SK-N-SH (cell line): ENCODE measurements at regions of chr11 and their contacts with region 1.

Region 1: GRCh38 chr11:72722050-72722748 is 30.0 kb downstream of the ARAP1 start:
- DNase-seq: peak; percentile 92
- H3K4me3 ChIP-seq: peak overlapping the region; percentile 50 to 65
- H3K27ac ChIP-seq: peak overlapping the region; percentile 65 to 96
- H3K4me1 ChIP-seq: peaks cover 13 to 53% of the 10 kb centered on the region in 2 experiments
- H3K27me3 ChIP-seq: no peaks in the 10 kb centered on the region
- CTCF ChIP-seq: no peak
- EP300 ChIP-seq: no peak
- RAD21 ChIP-seq: no peak

Region 2: DNA sequence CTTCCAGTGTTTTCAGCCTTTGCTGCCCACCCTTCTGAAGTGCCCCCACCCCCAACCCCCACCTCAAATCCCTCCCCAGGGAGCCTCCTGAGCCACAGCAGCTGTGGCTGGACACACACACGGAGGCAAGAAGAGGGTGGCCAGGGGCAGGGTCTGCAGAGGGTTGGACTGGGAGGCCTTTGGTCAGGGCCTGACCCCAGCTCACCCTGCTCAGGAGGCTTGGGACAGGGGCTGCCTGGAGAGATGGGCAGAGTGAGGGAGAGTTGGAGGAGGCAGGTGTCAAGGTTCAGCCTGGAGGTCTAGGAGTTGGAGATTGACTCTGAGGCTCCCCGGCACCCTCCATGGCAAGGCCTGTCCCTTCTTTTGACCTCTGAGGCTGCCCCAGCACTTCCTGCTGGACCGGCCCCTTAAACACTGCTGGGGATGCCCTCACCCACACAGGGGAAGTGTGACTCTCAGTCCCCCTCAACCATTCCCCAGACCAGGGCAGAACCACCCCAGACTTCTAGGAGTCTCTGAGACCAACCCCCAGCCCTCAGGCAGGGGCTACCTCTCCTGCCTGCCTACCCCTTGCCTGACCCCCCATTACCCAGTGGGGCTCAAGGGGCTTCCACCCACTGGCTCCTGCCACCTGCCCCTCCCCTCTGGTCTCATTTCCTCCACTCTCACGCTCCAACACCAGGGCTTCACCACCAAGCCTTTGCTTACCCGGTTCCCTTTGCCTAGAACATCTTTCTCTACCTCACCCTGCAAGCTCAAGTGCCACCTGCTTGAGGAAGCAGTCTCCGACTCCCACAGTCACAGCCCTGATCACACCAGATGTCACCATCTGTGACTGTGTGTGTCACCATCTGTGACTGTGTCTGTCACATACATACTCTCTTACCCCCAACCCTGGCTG is 21.4 kb after region 1 on chr11:
- CTCF ChIA-PET with region 1: interaction called, 42 read pairs
- POLR2A ChIA-PET with region 1: interaction called, 5 read pairs
- DNase-seq: no peak
- H3K4me3 ChIP-seq: no peak overlapping the region
- H3K27ac ChIP-seq: no peak overlapping the region; a peak in 1 of 4 replicates
- H3K4me1 ChIP-seq: peaks cover 0 to 69% of the 10 kb centered on the region in 2 experiments; a peak in 2 of 4 replicates
- H3K27me3 ChIP-seq: no peaks in the 10 kb centered on the region
- CTCF ChIP-seq: no peak
- EP300 ChIP-seq: no peak
- RAD21 ChIP-seq: no peak

Region 3: DNA sequence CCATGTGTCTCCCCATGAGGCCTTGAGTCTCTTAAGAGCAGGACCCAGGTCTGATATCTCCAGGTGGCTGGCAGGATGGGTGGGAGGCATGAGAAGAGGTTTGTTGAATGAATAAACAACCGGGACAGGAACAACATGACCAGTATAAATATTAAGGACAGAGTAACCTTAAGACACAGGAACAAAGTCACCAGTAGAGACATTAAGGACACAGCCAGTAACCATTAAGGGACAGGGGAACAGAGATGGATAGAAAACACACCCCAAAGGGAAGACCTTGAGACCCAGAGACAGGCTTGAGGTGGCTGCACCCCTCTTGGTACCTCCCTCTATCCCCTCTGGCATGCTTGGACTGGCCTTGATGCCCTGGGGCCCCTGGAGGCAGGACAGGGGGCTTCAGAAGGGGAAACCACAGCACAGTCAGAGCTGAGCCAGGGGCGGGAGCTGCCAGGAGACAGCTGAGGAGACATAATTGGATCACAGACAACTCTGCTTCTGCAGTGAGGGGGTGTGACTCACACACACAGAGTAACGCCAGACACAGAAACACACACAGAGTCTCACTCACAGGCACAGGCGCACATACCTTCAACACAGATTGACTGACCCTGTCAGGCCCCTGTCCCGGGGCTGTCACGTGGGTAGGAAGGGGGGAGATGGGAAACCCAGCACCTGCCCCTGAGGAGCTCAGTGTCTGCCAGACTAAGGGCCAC is 50.9 kb after region 1 on chr11:
- CTCF ChIA-PET with region 1: interaction called, 33 read pairs
- POLR2A ChIA-PET with region 1: no interaction called
- DNase-seq: peak; percentile 87
- H3K4me3 ChIP-seq: no peak overlapping the region
- H3K27ac ChIP-seq: peak overlapping the region; percentile 52 to 90; a peak in 3 of 4 replicates
- H3K4me1 ChIP-seq: peaks cover 26 to 64% of the 10 kb centered on the region in 2 experiments
- H3K27me3 ChIP-seq: no peaks in the 10 kb centered on the region
- CTCF ChIP-seq: no peak
- EP300 ChIP-seq: peak in 1 of 2 experiments; percentile 81; a peak in 2 of 4 replicates
- RAD21 ChIP-seq: peak; percentile 18; the same call in 1 of the 2 replicates

Region 4: GRCh38 chr11:72787216-72788104 is 65.3 kb after region 1 on chr11:
- CTCF ChIA-PET with region 1: interaction called, 198 read pairs
- POLR2A ChIA-PET with region 1: interaction called, 4 read pairs
- DNase-seq: peak; percentile 46
- H3K4me3 ChIP-seq: no peak overlapping the region
- H3K27ac ChIP-seq: no peak overlapping the region
- H3K4me1 ChIP-seq: peaks cover 9 to 15% of the 10 kb centered on the region in 2 experiments; a peak in 1 of 4 replicates
- H3K27me3 ChIP-seq: no peaks in the 10 kb centered on the region
- CTCF ChIP-seq: no peak
- EP300 ChIP-seq: no peak
- RAD21 ChIP-seq: no peak

Region 5: GRCh38 chr11:72814286-72815109 is 92.3 kb after region 1 on chr11 and contains the start of gene ATG16L2:
- CTCF ChIA-PET with region 1: interaction called, 33 read pairs
- POLR2A ChIA-PET with region 1: interaction called, 5 read pairs
- DNase-seq: peak; percentile 98
- H3K4me3 ChIP-seq: peak within 1 kb of the TSS; percentile 83 to 92
- H3K27ac ChIP-seq: peak within 1 kb of the TSS; percentile 91 to 96
- H3K4me1 ChIP-seq: peaks cover 8 to 33% of the 10 kb centered on the region in 2 experiments; a peak in 2 of 4 replicates
- H3K27me3 ChIP-seq: no peaks in the 10 kb centered on the region
- CTCF ChIP-seq: peak; percentile 18
- EP300 ChIP-seq: no peak; a peak in 1 of 4 replicates
- RAD21 ChIP-seq: no peak
- polyA plus RNA-seq, gene ATG16L2: 26.9 and 29.4 TPM in 2 replicates

Region 6: GRCh38 chr11:72831513-72832300 is 109.5 kb after region 1 on chr11:
- CTCF ChIA-PET with region 1: interaction called, 13 read pairs
- POLR2A ChIA-PET with region 1: no interaction called
- DNase-seq: peak; percentile 88
- H3K4me3 ChIP-seq: no peak overlapping the region; a peak in 1 of 4 replicates
- H3K27ac ChIP-seq: no peak overlapping the region; a peak in 1 of 4 replicates
- H3K4me1 ChIP-seq: peaks cover 5 to 10% of the 10 kb centered on the region in 2 experiments; a peak in 2 of 4 replicates
- H3K27me3 ChIP-seq: no peaks in the 10 kb centered on the region
- CTCF ChIP-seq: peak; percentile 97
- EP300 ChIP-seq: no peak
- RAD21 ChIP-seq: peak; percentile 98